ENCODE measurements at regions of chr11 and their contacts with region 1.

Region 1: GRCh38 chr11:103586756-103587155 is 449.7 kb upstream of the DDI1 start:
- DNase-seq: peak; percentile 30 to 32
- ATAC-seq: peak; percentile 95 to 96
- H3K4me3 ChIP-seq: no peak overlapping the region
- H3K27ac ChIP-seq: peak overlapping the region; percentile 33 to 73 (median 54)
- H3K4me1 ChIP-seq: peaks cover 24% of the 10 kb centered on the region in 2 donors
- H3K27me3 ChIP-seq: no peaks in the 10 kb centered on the region
- CTCF ChIP-seq: no peak
- POLR2A ChIP-seq: no peak

Region 2: DNA sequence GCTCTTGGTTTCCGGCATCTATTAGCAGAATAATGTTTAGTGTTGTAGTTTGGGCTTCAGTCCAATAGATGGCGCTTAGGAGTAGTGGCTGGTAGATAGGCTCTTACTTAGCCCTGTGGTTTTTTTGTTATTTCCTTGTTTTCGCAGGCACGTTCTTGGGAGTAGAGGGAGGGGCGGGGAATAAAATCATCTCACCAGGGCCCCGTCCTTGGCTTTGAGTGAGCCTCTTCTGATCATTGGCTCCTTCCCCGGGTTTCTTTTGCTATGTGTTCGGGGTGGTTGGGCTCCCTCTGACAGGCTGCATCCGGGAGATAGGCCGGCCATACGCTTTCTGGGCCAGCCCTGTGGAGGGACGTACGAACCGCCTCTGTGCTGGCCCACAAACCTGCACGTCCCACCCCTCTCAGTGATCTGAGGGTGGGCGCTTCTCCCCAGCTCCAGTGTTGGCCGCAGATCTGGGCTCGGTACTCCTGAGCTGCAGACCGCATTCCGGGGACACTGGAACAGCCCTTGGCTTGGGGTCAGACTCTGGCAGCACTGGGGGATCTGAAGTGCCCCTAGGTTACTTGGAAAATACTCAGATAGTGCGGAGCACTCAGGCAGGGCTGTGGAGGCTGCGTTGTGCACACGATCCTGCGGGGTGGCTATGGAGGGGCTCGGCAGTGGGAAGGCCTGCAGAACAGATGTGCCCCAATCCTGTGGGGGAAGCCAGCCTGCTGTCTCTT is 260.5 kb before region 1 on chr11:
- in situ Hi-C with region 1: loop called in 1 of 4 experiments (anchors 25 kb)
- intact Hi-C with region 1: no loop called
- DNase-seq: no peak
- ATAC-seq: peak in 1 of 2 donors; percentile 36
- H3K4me3 ChIP-seq: no peak overlapping the region
- H3K27ac ChIP-seq: no peak overlapping the region
- H3K4me1 ChIP-seq: no peaks in the 10 kb centered on the region
- H3K27me3 ChIP-seq: no peaks in the 10 kb centered on the region
- CTCF ChIP-seq: peak in 1 of 5 experiments; percentile 25
- POLR2A ChIP-seq: no peak

Region 3: DNA sequence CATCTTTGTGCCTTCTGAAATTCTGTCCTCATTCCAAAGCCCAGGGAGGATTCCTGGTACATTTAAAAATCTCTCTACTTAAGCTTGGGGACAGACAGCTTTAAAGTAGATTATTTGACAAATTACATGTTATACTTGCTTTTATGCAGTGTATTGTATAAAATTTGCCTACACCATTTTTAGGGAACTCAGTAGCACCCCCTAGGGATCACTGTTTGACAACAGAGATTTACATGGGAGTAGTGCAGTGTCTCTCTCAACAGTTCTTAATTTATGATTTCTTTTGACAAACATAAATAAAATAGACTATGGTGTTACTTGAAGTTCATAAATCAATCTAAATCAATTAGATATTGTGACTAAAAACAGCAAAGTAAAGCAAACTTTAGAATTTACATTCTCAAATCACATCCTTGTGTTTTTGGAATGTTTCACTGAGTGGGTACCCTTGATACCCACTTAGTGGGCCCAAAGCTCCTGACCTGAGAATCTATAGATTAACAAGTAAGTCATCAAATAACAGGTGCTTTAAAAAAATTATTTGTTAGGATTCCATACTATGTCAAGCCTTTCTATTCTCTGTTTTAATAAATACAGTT is 48.8 kb before region 1 on chr11:
- in situ Hi-C with region 1: no loop called
- intact Hi-C with region 1: loop called (anchors 5 kb)
- DNase-seq: no peak
- ATAC-seq: no peak
- H3K4me3 ChIP-seq: no peak overlapping the region
- H3K27ac ChIP-seq: no peak overlapping the region
- H3K4me1 ChIP-seq: peaks cover 16% of the 10 kb centered on the region in 2 donors
- H3K27me3 ChIP-seq: no peaks in the 10 kb centered on the region
- CTCF ChIP-seq: peak in 1 of 5 experiments; percentile 8
- POLR2A ChIP-seq: no peak

Region 4: DNA sequence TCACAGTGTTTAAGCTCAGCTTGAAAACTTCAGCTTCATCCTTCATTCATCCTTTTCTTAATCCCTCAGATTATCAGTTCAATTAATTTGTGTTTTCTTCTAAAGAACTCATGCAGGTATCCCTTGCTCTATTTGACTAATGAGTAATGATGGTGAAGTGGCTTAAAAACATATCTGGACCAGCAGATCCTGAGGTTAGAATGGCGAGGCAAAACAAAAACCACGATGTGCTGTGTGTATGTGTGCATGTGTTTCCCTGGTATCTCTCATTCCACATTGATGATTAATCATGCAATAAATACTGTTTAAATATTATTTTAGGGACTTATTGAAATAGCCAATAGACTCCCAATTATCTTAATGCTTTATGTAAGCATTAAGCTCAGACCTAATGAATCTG is 40.5 kb before region 1 on chr11:
- in situ Hi-C with region 1: loop called in 1 of 4 experiments (anchors 5 kb)
- intact Hi-C with region 1: no loop called
- DNase-seq: no peak
- ATAC-seq: no peak
- H3K4me3 ChIP-seq: no peak overlapping the region
- H3K27ac ChIP-seq: no peak overlapping the region
- H3K4me1 ChIP-seq: no peaks in the 10 kb centered on the region
- H3K27me3 ChIP-seq: no peaks in the 10 kb centered on the region
- CTCF ChIP-seq: no peak
- POLR2A ChIP-seq: no peak

Region 5: DNA sequence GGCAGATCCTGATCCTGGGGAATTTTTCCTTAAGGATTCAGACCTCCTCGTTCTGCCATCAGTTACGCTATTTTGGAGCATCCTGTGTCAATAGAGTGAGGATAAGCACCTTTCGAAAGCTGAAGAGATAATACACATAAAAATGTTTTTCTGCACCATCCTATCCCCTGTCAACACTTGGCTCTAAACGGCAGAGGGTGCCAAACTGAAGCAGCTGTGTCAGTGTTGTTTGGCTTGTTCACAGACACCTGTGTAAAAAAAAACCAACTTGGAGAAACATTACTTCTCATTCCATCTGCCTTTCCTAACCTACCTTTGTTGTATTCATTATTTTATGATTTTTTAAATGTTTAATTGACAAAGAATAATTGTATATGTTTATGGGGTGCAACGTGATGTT is 32.7 kb after region 1 on chr11:
- in situ Hi-C with region 1: no loop called
- intact Hi-C with region 1: no loop called
- DNase-seq: no peak
- ATAC-seq: no peak
- H3K4me3 ChIP-seq: no peak overlapping the region
- H3K27ac ChIP-seq: no peak overlapping the region
- H3K4me1 ChIP-seq: no peaks in the 10 kb centered on the region
- H3K27me3 ChIP-seq: no peaks in the 10 kb centered on the region
- CTCF ChIP-seq: no peak
- POLR2A ChIP-seq: no peak